ENCODE measurements at regions of chr2 and their contacts with region 1.

Region 1: GRCh38 chr2:219002395-219003266 is 9.4 kb upstream of the CRYBA2 start:
- DNase-seq: no peak
- ATAC-seq: peak; percentile 72
- H3K4me3 ChIP-seq: peak overlapping the region; percentile 33 to 49
- H3K27ac ChIP-seq: no peak overlapping the region
- H3K4me1 ChIP-seq: no peaks in the 10 kb centered on the region; the same call in 1 of the 2 replicates
- H3K27me3 ChIP-seq: peaks cover 4% of the 10 kb centered on the region; the same call in 1 of the 2 replicates
- CTCF ChIP-seq: peak; percentile 83

Region 2: GRCh38 chr2:219286436-219287115 is 283.9 kb after region 1 on chr2:
- CTCF ChIA-PET with region 1: interaction called, 15 read pairs
- POLR2A ChIA-PET with region 1: no interaction called
- in situ Hi-C with region 1: no loop called
- intact Hi-C with region 1: no loop called
- DNase-seq: no peak
- ATAC-seq: no peak
- H3K4me3 ChIP-seq: no peak overlapping the region
- H3K27ac ChIP-seq: no peak overlapping the region
- H3K4me1 ChIP-seq: peaks cover 4% of the 10 kb centered on the region; the same call in 1 of the 2 replicates
- H3K27me3 ChIP-seq: no peaks in the 10 kb centered on the region
- CTCF ChIP-seq: no peak